Panc1 (cell line): ENCODE measurements at regions of chr7 and their contacts with region 1.

Region 1: GRCh38 chr7:90743626-90744025 is 147.5 kb downstream of the CDK14 start:
- DNase-seq: no peak
- ATAC-seq: no peak
- H3K4me3 ChIP-seq: no peak overlapping the region
- H3K27ac ChIP-seq: no peak overlapping the region
- H3K4me1 ChIP-seq: no peaks in the 10 kb centered on the region
- H3K27me3 ChIP-seq: no peaks in the 10 kb centered on the region
- CTCF ChIP-seq: no peak

Region 2: DNA sequence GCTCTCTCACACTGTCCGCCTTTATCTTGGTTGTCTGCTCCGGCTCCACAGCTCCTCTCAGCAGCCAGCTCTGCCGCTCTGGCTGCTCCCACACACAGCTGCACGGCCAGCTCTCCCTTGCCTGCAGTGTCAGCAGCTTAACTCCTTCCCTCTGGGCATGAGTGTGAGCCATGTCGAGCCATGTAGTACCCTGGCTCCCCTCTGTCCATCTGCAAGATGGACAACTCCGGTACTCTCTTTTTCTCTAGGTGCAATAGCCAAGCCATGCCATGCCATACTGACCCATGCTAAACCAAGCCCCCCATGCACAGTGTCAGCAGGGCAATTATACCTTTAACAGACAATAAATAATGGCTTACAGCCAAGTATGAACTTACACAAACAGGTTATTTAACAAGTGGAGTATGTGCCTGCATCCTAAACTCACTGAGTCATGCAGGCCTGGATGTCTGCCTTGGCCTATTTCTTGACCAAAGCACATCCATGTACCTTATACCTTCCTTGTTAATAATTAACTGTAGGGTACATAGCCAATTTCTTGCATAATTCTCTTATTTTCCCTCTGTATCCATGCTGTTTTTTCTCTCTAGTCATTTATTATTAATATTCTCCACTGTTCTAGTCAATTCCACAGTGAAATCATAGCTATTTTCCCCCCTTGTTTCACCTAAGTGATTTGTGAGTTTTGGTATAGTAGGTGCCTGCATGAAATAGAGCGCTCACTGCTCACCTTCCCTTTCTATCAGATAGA is 23.4 kb after region 1 on chr7:
- CTCF ChIA-PET with region 1: no interaction called
- POLR2A ChIA-PET with region 1: no interaction called
- in situ Hi-C with region 1: no loop called
- intact Hi-C with region 1: no loop called
- DNase-seq: no peak
- ATAC-seq: no peak; the same call in 1 of the 2 replicates
- H3K4me3 ChIP-seq: no peak overlapping the region
- H3K27ac ChIP-seq: no peak overlapping the region
- H3K4me1 ChIP-seq: no peaks in the 10 kb centered on the region
- H3K27me3 ChIP-seq: no peaks in the 10 kb centered on the region
- CTCF ChIP-seq: no peak

Region 3: GRCh38 chr7:90789736-90790306 is 46.2 kb after region 1 on chr7:
- CTCF ChIA-PET with region 1: no interaction called
- POLR2A ChIA-PET with region 1: no interaction called
- in situ Hi-C with region 1: no loop called
- intact Hi-C with region 1: loop called (anchors 2 kb)
- DNase-seq: no peak
- ATAC-seq: no peak
- H3K4me3 ChIP-seq: no peak overlapping the region
- H3K27ac ChIP-seq: no peak overlapping the region
- H3K4me1 ChIP-seq: no peaks in the 10 kb centered on the region
- H3K27me3 ChIP-seq: no peaks in the 10 kb centered on the region
- CTCF ChIP-seq: no peak